CD8-positive, alpha-beta T cell (primary cell): ENCODE measurements at regions of chr5 and their contacts with region 1.

Region 1: GRCh38 chr5:68369457-68370125 is 154.0 kb downstream of the PIK3R1 start:
- DNase-seq: peak in 5 of 9 experiments; percentile 13 to 78 (median 55)
- ATAC-seq: peak; percentile 91
- H3K4me3 ChIP-seq: peak overlapping the region; percentile 18
- H3K4me3 Mint-ChIP-seq: peak overlapping the region; percentile 73
- H3K27ac ChIP-seq: peak overlapping the region in 1 of 2 experiments; percentile 32
- H3K27ac Mint-ChIP-seq: peak overlapping the region; percentile 73
- H3K4me1 ChIP-seq: peaks cover 21% of the 10 kb centered on the region
- H3K4me1 Mint-ChIP-seq: peaks cover 30% of the 10 kb centered on the region
- H3K27me3 ChIP-seq: no peaks in the 10 kb centered on the region
- H3K27me3 Mint-ChIP-seq: no peaks in the 10 kb centered on the region
- CTCF ChIP-seq: no peak

Region 2: GRCh38 chr5:68383888-68384310 is 14.3 kb after region 1 on chr5:
- CTCF ChIA-PET with region 1: no interaction called
- POLR2A ChIA-PET with region 1: interaction called, 4 read pairs
- intact Hi-C with region 1: loop called in 1 of 2 experiments (anchors 2 kb)
- DNase-seq: no peak
- ATAC-seq: no peak
- H3K4me3 ChIP-seq: no peak overlapping the region
- H3K4me3 Mint-ChIP-seq: no peak overlapping the region
- H3K27ac ChIP-seq: no peak overlapping the region
- H3K27ac Mint-ChIP-seq: no peak overlapping the region
- H3K4me1 ChIP-seq: peaks cover 10% of the 10 kb centered on the region
- H3K4me1 Mint-ChIP-seq: peaks cover 48% of the 10 kb centered on the region
- H3K27me3 ChIP-seq: no peaks in the 10 kb centered on the region
- H3K27me3 Mint-ChIP-seq: no peaks in the 10 kb centered on the region
- CTCF ChIP-seq: no peak